BJ (cell line): ENCODE measurements at regions of chr1 and their contacts with region 1.

Region 1: DNA sequence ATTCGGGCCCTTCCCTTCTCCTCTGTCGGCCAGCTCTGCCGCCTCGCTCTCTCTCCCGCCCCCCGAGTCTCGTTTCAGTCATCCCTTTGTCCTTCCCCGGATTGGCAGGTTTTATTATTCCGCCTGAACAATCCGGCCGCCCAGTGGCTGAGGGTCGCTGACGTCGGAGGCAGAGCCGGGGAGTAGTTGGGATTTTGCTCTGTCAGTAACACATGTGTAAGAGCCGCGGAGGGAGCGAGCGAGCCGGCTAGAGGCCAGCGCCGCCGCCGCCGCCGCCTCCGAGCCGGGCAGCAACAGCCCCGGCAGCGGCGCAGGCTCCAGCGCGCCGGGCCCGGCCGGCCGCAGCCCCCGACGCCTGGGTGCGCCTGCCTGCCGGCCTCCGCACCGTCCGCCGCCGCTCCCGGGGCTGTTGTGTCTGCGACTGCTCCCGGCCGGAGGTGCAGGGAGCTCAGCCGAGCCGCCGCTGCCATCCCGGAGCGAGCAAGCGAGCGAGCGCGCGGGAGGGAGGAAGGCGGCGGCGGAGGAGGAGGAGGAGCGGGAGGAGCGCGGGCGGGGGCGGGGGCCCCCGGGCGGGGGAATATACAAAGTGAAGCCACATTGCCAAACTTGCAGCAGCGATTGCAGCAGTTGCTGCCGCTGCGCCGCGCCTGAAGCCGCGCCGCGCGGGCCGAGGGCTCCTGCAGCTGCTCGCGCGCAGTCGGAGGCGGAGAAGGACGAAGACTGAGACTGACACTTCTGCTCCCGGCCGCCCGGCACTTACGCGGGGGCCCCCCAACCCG is at the start of gene LMO4:
- DNase-seq: peak; percentile 85
- H3K4me3 ChIP-seq: peak within 1 kb of the TSS; percentile 77
- H3K27me3 ChIP-seq: no peaks in the 10 kb centered on the region
- CTCF ChIP-seq: no peak
- polyA plus RNA-seq, gene LMO4: 77.9 and 81.9 TPM in 2 replicates

Region 2: GRCh38 chr1:87292684-87293493 is 35.6 kb before region 1 on chr1:
- CTCF ChIA-PET with region 1: interaction called, 29 read pairs
- POLR2A ChIA-PET with region 1: interaction called, 3 read pairs
- DNase-seq: no peak
- H3K4me3 ChIP-seq: no peak overlapping the region
- H3K27me3 ChIP-seq: peaks cover 4% of the 10 kb centered on the region; the same call in 1 of the 2 replicates
- CTCF ChIP-seq: peak; percentile 69

Region 3: GRCh38 chr1:87318056-87318650 is 10.3 kb before region 1 on chr1:
- CTCF ChIA-PET with region 1: interaction called, 31 read pairs
- POLR2A ChIA-PET with region 1: no interaction called
- DNase-seq: no peak
- H3K4me3 ChIP-seq: no peak overlapping the region
- H3K27me3 ChIP-seq: no peaks in the 10 kb centered on the region; the same call in 1 of the 2 replicates
- CTCF ChIP-seq: no peak

Region 4: GRCh38 chr1:87766737-87767136 is 438.3 kb after region 1 on chr1:
- CTCF ChIA-PET with region 1: no interaction called
- POLR2A ChIA-PET with region 1: interaction called, 14 read pairs
- DNase-seq: no peak
- H3K4me3 ChIP-seq: no peak overlapping the region
- H3K27me3 ChIP-seq: no peaks in the 10 kb centered on the region
- CTCF ChIP-seq: no peak

Region 5: GRCh38 chr1:87953732-87954344 is 625.4 kb after region 1 on chr1:
- CTCF ChIA-PET with region 1: interaction called, 14 read pairs
- POLR2A ChIA-PET with region 1: no interaction called
- DNase-seq: no peak
- H3K4me3 ChIP-seq: no peak overlapping the region
- H3K27me3 ChIP-seq: no peaks in the 10 kb centered on the region
- CTCF ChIP-seq: peak; percentile 87

Region 6: DNA sequence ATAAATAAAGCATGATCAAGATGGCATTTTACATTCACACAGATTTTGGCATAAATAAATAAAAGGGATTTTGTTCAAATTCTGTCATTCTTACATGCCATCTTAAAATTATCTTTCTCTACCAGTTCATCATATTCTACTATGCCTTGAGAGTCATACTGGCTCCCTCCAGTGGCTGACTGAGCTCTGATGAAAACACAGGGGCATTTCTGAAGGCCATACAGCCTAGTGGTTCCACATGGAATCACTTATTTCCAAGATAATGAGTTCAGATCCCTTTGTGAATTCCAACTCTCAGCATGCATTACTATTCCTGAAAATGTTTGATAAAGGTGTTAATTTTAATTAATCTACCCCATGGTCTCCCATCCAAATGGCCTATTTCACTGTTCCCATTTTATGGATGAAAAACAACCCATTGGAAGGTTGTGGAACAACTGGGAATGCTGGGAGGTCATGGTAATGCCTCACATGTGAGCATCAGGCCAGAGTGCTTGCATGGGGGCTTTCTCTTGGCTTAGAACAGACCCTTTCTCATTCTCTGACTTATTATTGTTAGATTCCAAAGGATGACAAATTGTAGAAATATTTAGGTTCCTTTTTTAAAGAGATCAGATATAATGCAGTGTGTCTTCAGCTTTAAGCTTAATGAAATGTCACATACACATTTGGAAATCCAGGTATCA is 733.2 kb after region 1 on chr1:
- CTCF ChIA-PET with region 1: interaction called, 25 read pairs
- POLR2A ChIA-PET with region 1: no interaction called
- DNase-seq: peak; percentile 4
- H3K4me3 ChIP-seq: no peak overlapping the region
- H3K27me3 ChIP-seq: no peaks in the 10 kb centered on the region
- CTCF ChIP-seq: peak; percentile 88